Activated T-helper 2 cell treated with anti-CD3 and anti-CD28 coated beads, Interferon-gamma antibody, Interleukin-2, Interleukin-4, amounts not matched to agents 10 μg/mL and 5 μg/mL and 100 μg/mL, durations not matched to agents 14 hours and 24 hours and 36 hours (primary cell): ENCODE measurements at regions of chr10 and their contacts with region 1.

Region 1: DNA sequence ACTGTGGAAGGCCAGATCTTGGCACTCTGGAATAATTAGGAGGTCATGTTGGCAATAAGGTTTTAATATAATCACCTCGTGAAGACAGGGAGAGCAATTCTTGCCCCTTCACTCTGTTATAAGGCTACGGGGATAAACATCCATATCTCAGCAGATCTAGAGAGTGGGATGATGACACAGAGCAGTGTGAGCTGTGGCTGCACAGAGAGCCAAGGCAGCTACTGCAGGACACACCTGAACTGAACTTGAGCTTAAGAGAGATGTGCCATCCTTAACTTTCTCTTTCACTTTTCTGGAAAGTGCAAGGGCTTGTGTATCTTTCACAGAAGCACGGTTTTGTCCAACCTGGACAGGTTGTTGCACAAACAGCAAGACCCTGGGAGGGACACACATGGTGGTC is 174.7 kb downstream of the GATA3 start:
- DNase-seq: peak; percentile 50
- H3K4me3 Mint-ChIP-seq: peak overlapping the region; percentile 61
- H3K27ac Mint-ChIP-seq: peak overlapping the region; percentile 68
- H3K4me1 Mint-ChIP-seq: peaks cover 50% of the 10 kb centered on the region
- H3K27me3 Mint-ChIP-seq: no peaks in the 10 kb centered on the region

Region 2: DNA sequence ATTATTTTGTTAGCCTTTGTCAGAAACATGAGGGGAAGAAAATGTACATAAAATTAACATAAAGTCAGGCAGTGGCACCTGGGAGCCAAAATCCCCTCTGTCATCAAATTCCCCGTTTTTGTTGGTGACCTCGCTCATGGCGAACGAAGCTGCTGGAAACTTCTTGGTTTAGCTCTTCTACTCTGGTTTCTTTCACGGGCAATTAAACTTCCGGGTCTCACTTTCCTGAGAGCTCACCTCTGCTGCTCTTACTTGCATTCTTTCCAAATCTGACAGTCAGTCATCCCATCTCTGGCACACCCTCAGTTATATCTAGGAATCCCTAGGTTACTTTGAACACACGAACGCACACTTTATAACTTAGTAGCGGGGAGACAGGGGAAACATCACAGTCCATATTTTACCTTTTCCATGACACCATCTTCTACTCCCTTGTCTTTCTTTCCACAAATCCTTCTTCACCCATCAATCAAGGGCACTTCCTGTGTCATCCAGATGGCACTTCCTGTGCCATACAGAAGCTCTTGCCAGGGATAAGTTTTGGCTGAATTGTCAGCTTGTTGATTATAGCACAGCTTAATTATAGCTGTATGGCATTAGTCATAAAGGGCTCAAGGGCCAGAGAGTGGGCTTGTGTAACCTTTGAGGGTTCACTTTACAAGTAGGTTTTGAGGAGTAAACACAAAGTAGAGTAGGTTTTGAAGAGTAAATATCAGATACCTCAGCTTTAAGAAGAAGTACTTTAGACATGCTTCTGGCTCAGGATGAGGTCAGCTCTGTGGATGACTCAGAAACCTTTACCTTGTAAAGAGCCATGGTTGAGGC is 69.6 kb before region 1 on chr10:
- intact Hi-C with region 1: no loop called
- DNase-seq: no peak
- H3K4me3 Mint-ChIP-seq: peak overlapping the region; percentile 15
- H3K27ac Mint-ChIP-seq: peak overlapping the region; percentile 74
- H3K4me1 Mint-ChIP-seq: peaks cover 21% of the 10 kb centered on the region
- H3K27me3 Mint-ChIP-seq: no peaks in the 10 kb centered on the region

Region 3: GRCh38 chr10:8183241-8183704 is 45.9 kb before region 1 on chr10:
- intact Hi-C with region 1: loop called (anchors 5 kb)
- DNase-seq: no peak
- H3K4me3 Mint-ChIP-seq: no peak overlapping the region
- H3K27ac Mint-ChIP-seq: no peak overlapping the region
- H3K4me1 Mint-ChIP-seq: peaks cover 15% of the 10 kb centered on the region
- H3K27me3 Mint-ChIP-seq: no peaks in the 10 kb centered on the region